Calu3 (cell line): ENCODE measurements at regions of chr15 and their contacts with region 1.

Region 1: DNA sequence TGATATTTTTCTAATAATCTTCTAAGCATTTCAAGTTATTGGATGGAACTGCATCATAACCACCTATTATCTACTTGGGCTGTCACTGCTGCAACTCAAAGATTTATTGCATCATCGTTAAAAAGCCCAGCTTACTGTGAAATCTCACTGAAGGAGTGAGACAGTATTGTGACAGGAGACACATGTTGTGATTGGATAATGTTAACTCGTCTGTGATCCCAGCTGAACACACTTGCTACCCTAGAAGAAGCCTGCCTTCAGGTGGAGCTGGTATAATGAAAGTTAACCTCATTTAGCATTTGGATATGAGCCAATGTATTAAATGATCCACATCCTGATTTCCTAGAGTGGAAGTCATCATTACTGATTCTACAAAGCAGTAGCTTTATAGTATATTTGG is 138.1 kb downstream of the MAP2K5 start:
- DNase-seq: no peak
- H3K4me3 Mint-ChIP-seq: no peak overlapping the region
- H3K27ac Mint-ChIP-seq: peak overlapping the region; percentile 18
- H3K4me1 Mint-ChIP-seq: peaks cover 10% of the 10 kb centered on the region
- H3K27me3 Mint-ChIP-seq: no peaks in the 10 kb centered on the region
- CTCF ChIP-seq: no peak

Region 2: GRCh38 chr15:67641453-67641852 is 39.2 kb before region 1 on chr15:
- CTCF ChIA-PET with region 1: no interaction called
- intact Hi-C with region 1: loop called (anchors 2 kb)
- DNase-seq: no peak
- H3K4me3 Mint-ChIP-seq: no peak overlapping the region
- H3K27ac Mint-ChIP-seq: no peak overlapping the region
- H3K4me1 Mint-ChIP-seq: no peaks in the 10 kb centered on the region
- H3K27me3 Mint-ChIP-seq: no peaks in the 10 kb centered on the region
- CTCF ChIP-seq: no peak

Region 3: GRCh38 chr15:68097029-68097428 is 416.4 kb after region 1 on chr15:
- CTCF ChIA-PET with region 1: no interaction called
- intact Hi-C with region 1: no loop called
- DNase-seq: no peak
- H3K4me3 Mint-ChIP-seq: no peak overlapping the region
- H3K27ac Mint-ChIP-seq: no peak overlapping the region
- H3K4me1 Mint-ChIP-seq: peaks cover 10% of the 10 kb centered on the region
- H3K27me3 Mint-ChIP-seq: no peaks in the 10 kb centered on the region
- CTCF ChIP-seq: no peak